B cell (primary cell): ENCODE measurements at regions of chr2 and their contacts with region 1.

Region 1: DNA sequence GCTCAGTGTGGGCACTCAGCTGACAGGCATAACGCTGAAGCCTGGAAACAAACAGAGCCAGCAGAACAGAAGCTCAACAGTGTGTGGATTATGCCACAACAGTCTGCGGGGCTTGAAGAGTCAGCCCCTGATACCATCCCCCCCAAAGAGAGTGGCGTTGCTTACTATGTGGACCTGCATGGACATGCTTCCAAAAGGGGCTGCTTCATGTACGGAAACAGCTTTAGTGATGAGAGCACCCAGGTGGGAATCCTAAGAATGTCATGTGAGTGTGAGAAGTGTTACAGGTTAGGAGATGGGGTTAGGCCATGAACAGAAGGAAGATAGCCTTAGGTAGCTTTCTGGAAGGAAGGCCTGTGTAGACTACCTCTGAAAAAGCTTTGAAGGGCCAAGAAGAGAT is 4.4 kb downstream of the AGBL5 start:
- DNase-seq: no peak
- ATAC-seq: no peak
- H3K4me3 ChIP-seq: no peak overlapping the region
- H3K4me3 Mint-ChIP-seq: no peak overlapping the region
- H3K27ac ChIP-seq: no peak overlapping the region
- H3K27ac Mint-ChIP-seq: no peak overlapping the region
- H3K4me1 ChIP-seq: peaks cover 4 to 6% of the 10 kb centered on the region in 2 donors
- H3K4me1 Mint-ChIP-seq: peaks cover 9% of the 10 kb centered on the region
- H3K27me3 ChIP-seq: no peaks in the 10 kb centered on the region
- H3K27me3 Mint-ChIP-seq: peaks cover 1% of the 10 kb centered on the region
- CTCF ChIP-seq: no peak

Region 2: GRCh38 chr2:27071277-27071989 is 15.5 kb after region 1 on chr2 and contains the start of gene OST4:
- CTCF ChIA-PET with region 1: interaction called, 25 read pairs
- POLR2A ChIA-PET with region 1: interaction called, 48 read pairs
- intact Hi-C with region 1: loop called (anchors 1 kb)
- DNase-seq: peak; percentile 93
- ATAC-seq: peak; percentile 95
- H3K4me3 ChIP-seq: peak within 1 kb of the TSS; percentile 79 to 91 (median 88)
- H3K4me3 Mint-ChIP-seq: peak within 1 kb of the TSS; percentile 99
- H3K27ac ChIP-seq: peak within 1 kb of the TSS; percentile 64 to 87
- H3K27ac Mint-ChIP-seq: peak within 1 kb of the TSS; percentile 95
- H3K4me1 ChIP-seq: peaks cover 35 to 43% of the 10 kb centered on the region in 2 donors
- H3K4me1 Mint-ChIP-seq: peaks cover 62% of the 10 kb centered on the region
- H3K27me3 ChIP-seq: no peaks in the 10 kb centered on the region
- H3K27me3 Mint-ChIP-seq: no peaks in the 10 kb centered on the region
- CTCF ChIP-seq: no peak
- total RNA-seq, gene OST4: 195 and 199 TPM in 2 replicates